ENCODE measurements at regions of chr15 and their contacts with region 1.

Region 1: DNA sequence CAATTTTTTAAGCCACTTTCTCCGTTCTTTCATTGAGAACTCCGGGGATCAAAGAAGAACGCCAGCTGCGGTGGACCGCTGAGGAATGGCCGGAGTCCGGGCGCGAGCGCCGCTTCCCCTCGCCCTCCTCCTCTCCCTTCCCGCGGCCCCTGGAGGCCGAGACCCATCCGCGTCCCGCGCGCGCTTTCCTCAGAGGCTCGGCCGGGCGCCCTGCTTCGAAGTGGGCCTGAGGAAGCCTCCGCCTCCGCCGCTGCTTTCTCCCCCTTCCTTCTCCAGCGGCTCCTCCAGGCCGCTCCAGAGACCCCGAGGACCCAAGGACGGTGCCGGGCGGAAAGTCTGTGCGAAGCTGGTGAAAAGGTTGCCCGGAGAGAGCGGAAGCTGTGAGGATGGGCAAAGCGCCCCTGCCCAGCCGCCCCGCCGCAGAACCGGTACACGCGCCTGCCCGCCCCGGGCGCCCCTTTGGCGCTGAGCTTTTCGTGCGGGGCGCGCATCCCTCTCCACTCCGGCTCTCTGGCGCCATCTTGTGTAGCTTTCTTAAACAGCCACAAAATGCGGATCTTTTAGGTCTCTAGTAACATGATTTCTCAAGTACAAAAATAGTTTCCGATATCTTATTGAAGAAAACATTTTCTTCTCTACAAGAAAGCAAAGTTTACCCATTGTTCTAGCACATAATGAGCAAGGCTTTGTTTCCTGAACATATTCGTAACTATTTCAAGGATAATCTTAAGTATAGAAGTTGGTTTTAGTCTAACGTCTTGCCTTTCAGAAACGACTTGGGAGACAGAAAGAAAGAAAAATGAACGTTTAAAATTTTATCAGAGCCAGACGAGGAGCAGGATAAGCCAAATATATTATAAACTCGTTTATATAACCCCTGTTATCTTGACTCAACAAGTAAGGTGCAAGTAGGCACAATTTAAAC is 59.2 kb upstream of the FAM174B start:
- DNase-seq: peak; percentile 87
- H3K4me3 ChIP-seq: peak overlapping the region; percentile 27 to 62 (median 58)
- H3K27ac ChIP-seq: peak overlapping the region; percentile 74
- H3K4me1 ChIP-seq: peaks cover 12% of the 10 kb centered on the region
- H3K27me3 ChIP-seq: no peaks in the 10 kb centered on the region
- CTCF ChIP-seq: peak; percentile 69 to 85
- POLR2A ChIP-seq: peak; percentile 31

Region 2: GRCh38 chr15:92097474-92098178 is 617.1 kb before region 1 on chr15:
- CTCF ChIA-PET with region 1: interaction called, 67 read pairs
- POLR2A ChIA-PET with region 1: no interaction called
- dilution Hi-C with region 1: no loop called
- intact Hi-C with region 1: loop called (anchors 1 kb)
- DNase-seq: peak; percentile 57
- H3K4me3 ChIP-seq: no peak overlapping the region
- H3K27ac ChIP-seq: no peak overlapping the region
- H3K4me1 ChIP-seq: no peaks in the 10 kb centered on the region
- H3K27me3 ChIP-seq: no peaks in the 10 kb centered on the region
- CTCF ChIP-seq: peak; percentile 68
- POLR2A ChIP-seq: no peak

Region 3: GRCh38 chr15:92533298-92533697 is 181.4 kb before region 1 on chr15:
- CTCF ChIA-PET with region 1: interaction called, 18 read pairs
- POLR2A ChIA-PET with region 1: no interaction called
- dilution Hi-C with region 1: no loop called
- intact Hi-C with region 1: no loop called
- DNase-seq: peak; percentile 86
- H3K4me3 ChIP-seq: no peak overlapping the region
- H3K27ac ChIP-seq: peak overlapping the region; percentile 82
- H3K4me1 ChIP-seq: peaks cover 21% of the 10 kb centered on the region
- H3K27me3 ChIP-seq: no peaks in the 10 kb centered on the region
- CTCF ChIP-seq: no peak
- POLR2A ChIP-seq: no peak

Region 4: DNA sequence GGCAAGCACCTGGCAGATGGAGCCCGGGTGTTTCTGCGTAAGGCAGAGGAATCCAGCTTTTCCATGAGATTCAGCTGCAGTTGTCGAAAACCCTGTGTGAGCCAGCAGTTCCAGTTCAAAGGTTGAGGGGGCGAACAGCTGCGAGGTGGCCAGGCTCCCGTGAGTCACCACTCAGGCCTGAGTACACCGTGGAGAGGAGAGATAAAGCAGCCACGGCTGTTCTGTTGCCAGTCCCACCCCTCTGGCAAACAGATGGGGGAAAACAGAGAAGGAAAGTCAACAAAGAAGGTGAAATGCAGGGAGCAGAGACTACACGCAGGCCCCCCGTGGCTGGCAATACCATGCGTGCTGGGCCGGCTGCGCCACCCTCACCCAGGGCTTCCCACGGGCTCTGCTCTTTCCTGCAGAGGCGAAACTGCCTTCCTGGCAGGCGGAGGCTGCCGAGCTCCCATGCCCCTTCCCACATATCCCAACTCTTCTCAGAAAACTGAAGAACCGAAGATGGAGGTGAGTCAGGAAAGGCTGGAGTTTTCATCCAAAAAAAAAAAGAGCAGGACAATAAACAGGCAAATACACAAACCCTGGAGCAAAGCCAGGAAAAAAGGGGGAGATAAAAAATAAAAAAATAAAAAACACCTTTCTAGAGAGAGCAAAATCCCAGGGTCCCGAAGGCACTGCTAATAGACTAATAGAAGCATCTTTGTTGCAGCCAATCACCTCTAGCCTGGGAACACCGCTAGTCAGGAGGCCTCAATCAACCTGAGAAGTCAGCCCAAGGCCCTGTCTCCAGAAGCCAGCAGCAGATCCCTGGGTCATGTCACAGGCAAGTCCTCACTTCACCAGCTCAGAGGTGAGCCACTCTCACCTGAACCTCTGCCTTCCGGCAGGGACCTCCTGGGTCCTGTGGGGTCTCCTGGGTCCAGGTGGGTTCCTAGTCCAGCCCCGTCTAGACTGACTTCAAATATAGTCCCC is 96.9 kb before region 1 on chr15:
- CTCF ChIA-PET with region 1: interaction called, 39 read pairs
- POLR2A ChIA-PET with region 1: no interaction called
- dilution Hi-C with region 1: no loop called
- intact Hi-C with region 1: loop called (anchors 2 kb)
- DNase-seq: peak; percentile 99
- H3K4me3 ChIP-seq: no peak overlapping the region
- H3K27ac ChIP-seq: peak overlapping the region; percentile 72
- H3K4me1 ChIP-seq: peaks cover 29% of the 10 kb centered on the region
- H3K27me3 ChIP-seq: no peaks in the 10 kb centered on the region
- CTCF ChIP-seq: no peak
- POLR2A ChIP-seq: no peak

Region 5: DNA sequence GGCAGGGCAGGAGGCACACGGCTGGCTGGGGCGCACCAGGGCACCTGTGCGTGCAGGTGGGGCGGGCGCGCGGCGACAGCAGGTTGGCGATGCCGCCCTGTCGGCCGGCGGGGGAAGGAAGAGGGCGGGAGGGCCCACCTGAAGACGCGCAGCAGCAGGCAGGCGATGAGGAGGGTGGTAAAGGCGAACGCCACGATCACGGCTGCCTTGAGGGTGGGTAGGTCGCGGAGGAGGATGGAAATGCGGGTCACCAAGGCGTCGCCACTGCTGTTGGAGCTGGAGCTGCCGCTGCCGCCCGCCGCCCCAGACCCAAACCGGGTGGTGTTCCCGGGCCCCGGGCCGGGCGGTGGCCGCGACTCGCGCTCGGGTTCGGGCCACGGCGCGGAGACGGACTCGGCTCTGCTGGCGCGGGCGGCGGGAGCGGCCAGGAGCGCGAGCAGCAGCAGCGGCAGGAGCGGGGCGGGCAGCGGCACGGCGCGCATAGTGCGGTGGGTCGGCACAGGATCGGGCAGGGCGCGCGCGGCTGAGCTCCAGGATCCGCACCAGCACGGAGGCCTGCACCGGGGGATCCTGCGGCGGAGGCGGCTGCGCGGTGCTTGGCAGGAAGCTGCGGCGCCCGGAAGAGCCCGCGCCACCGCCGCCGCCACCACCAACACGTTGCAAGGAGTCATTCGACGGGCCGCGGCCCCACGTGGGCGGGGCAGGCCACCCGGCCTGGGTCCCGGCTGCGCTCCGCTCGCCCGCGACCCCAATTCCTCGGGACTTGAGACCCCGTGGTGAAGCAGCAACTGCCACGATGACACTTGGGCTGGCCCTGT is 59.4 kb before region 1 on chr15 and contains the start of gene FAM174B:
- CTCF ChIA-PET with region 1: interaction called, 25 read pairs
- POLR2A ChIA-PET with region 1: interaction called, 3 read pairs
- dilution Hi-C with region 1: no loop called
- intact Hi-C with region 1: loop called (anchors 5 kb)
- DNase-seq: peak; percentile 51
- H3K4me3 ChIP-seq: peak within 1 kb of the TSS; percentile 47 to 93 (median 81)
- H3K27ac ChIP-seq: peak within 1 kb of the TSS; percentile 56
- H3K4me1 ChIP-seq: peaks cover 22% of the 10 kb centered on the region
- H3K27me3 ChIP-seq: no peaks in the 10 kb centered on the region
- CTCF ChIP-seq: no peak
- POLR2A ChIP-seq: peak; percentile 53
- total RNA-seq, gene FAM174B: 20.0 and 30.2 TPM in 2 replicates

Region 6: DNA sequence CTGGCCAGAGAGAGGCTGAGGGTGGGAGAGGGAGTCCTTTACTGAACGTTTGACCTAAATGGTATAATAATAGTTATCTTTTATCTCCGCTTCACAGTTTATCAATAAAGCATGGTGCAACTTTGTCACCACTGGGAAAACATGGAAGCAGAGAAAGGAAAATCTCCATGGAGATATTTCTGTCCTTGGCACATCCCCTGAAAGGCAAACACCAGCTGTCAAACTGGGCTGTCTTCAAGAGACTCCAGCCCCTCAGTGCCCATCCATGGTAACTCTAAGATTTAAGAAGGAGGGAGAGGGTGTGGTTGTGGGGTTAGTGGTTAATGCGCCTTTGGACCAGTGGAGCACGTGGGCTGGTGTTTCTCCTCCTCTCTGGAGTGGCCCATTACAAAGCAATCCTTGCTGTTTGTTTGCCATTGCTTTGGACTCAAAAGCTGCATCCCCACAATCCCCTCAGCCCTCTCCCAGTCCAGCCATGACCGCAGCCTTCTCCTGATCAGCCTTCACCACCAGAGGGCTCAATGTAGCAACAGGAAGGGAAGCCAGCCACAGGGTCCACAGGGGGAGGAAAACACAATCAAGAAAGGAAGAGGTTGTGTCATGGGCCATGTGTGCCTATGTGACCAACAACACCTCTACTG is 20.9 kb before region 1 on chr15:
- CTCF ChIA-PET with region 1: interaction called, 45 read pairs
- POLR2A ChIA-PET with region 1: no interaction called
- dilution Hi-C with region 1: no loop called
- intact Hi-C with region 1: loop called (anchors 1 kb)
- DNase-seq: peak; percentile 69
- H3K4me3 ChIP-seq: no peak overlapping the region
- H3K27ac ChIP-seq: no peak overlapping the region
- H3K4me1 ChIP-seq: peaks cover 2% of the 10 kb centered on the region
- H3K27me3 ChIP-seq: no peaks in the 10 kb centered on the region
- CTCF ChIP-seq: peak; percentile 71 to 75
- POLR2A ChIP-seq: no peak